Transverse colon (tissue), 4 donors: ENCODE measurements at regions of chr7 and their contacts with region 1.

Region 1: GRCh38 chr7:33932832-33933468 is 27.6 kb downstream of the BMPER start:
- DNase-seq: peak; percentile 76
- H3K4me3 ChIP-seq: no peak overlapping the region
- H3K27ac ChIP-seq: no peak overlapping the region
- H3K4me1 ChIP-seq: peaks cover 0 to 3% (median 0%) of the 10 kb centered on the region in 4 donors
- H3K27me3 ChIP-seq: no peaks in the 10 kb centered on the region
- CTCF ChIP-seq: peak; percentile 82 to 95 (median 94)
- EP300 ChIP-seq: no peak
- POLR2A ChIP-seq: no peak

Region 2: DNA sequence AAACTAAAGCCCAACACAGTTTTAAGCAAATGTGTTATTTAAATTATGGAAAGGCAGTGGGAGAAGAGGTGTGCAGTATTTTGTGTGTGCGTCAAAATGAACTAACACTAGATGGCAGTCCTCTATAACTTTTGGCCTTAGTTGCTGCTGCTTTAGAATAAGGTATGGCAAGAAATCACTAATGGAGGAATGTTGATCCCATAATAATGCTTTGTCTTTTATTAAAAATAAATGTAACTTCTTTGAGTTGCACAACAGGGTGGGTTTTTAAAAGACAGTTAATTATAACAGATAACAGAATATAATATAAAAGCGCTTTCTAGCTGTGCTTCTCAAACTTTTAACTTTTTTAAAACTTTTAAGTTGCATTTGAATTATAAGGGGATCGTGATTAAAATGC is 747.2 kb before region 1 on chr7:
- in situ Hi-C with region 1: loop called in 1 of 4 experiments (anchors 25 kb)
- intact Hi-C with region 1: no loop called
- DNase-seq: no peak
- H3K4me3 ChIP-seq: no peak overlapping the region
- H3K27ac ChIP-seq: no peak overlapping the region
- H3K4me1 ChIP-seq: no peaks in the 10 kb centered on the region
- H3K27me3 ChIP-seq: no peaks in the 10 kb centered on the region
- CTCF ChIP-seq: peak; percentile 44 to 51 (median 46)
- EP300 ChIP-seq: no peak
- POLR2A ChIP-seq: no peak

Region 3: DNA sequence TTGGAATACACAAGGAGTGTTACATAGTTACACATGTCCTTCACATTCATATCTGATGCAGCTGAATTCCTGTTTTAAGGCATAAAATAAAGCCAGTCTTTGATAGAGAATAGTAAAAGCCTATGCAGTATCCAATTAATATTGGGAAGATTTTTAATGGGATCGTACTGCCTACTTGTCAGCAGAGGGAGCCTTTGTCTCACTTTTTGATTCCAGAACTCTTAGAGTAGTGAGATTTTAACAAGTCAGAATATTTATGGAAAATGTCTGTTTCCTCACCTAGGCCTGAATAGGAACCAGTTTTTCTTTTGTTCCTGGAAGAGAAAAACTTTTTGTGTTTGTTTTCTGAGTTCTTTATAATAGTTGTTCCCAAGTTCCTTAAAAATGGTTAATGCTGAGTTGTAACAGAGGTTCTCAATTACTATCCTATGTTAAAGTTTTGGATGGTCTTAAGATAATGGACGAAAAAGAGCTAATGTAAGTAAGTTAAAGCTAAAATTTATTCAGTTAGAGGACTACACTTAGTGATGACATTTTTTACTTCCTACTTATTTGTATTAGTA is 689.5 kb before region 1 on chr7:
- in situ Hi-C with region 1: loop called in 2 of 4 experiments (anchors 10 to 25 kb)
- intact Hi-C with region 1: no loop called
- DNase-seq: no peak
- H3K4me3 ChIP-seq: no peak overlapping the region
- H3K27ac ChIP-seq: no peak overlapping the region
- H3K4me1 ChIP-seq: no peaks in the 10 kb centered on the region
- H3K27me3 ChIP-seq: no peaks in the 10 kb centered on the region
- CTCF ChIP-seq: peak; percentile 40 to 56 (median 50)
- EP300 ChIP-seq: no peak
- POLR2A ChIP-seq: no peak

Region 4: DNA sequence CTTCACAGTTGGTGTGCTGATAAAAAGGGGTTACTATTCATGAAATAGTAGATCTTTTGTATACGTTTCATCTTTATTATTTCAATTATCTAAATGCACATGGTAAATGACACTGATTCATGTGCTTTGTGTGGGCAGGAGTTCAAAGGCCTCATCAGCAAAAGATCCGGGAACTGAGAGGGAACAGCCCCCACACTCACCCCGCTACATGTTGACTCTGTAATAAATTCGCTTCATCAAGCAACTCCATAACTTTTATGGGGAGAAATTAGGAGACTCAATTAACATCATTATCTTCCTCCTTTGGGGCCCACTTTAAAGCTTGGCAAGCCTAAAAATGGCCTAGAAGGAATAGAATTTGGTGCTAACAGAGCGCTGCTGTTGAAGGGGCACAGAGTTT is 278.3 kb before region 1 on chr7:
- in situ Hi-C with region 1: no loop called
- intact Hi-C with region 1: no loop called
- DNase-seq: no peak
- H3K4me3 ChIP-seq: no peak overlapping the region
- H3K27ac ChIP-seq: no peak overlapping the region
- H3K4me1 ChIP-seq: peaks cover 0 to 4% (median 0%) of the 10 kb centered on the region in 4 donors
- H3K27me3 ChIP-seq: no peaks in the 10 kb centered on the region
- CTCF ChIP-seq: no peak
- EP300 ChIP-seq: no peak
- POLR2A ChIP-seq: no peak

Region 5: GRCh38 chr7:33841705-33842129 is 91.2 kb before region 1 on chr7:
- in situ Hi-C with region 1: no loop called
- intact Hi-C with region 1: no loop called
- DNase-seq: no peak
- H3K4me3 ChIP-seq: no peak overlapping the region
- H3K27ac ChIP-seq: no peak overlapping the region
- H3K4me1 ChIP-seq: no peaks in the 10 kb centered on the region
- H3K27me3 ChIP-seq: no peaks in the 10 kb centered on the region
- CTCF ChIP-seq: no peak
- EP300 ChIP-seq: no peak
- POLR2A ChIP-seq: no peak